IMR-90 (cell line): ENCODE measurements at regions of chr4 and their contacts with region 1.

Region 1: GRCh38 chr4:122334828-122335227 is 44.0 kb upstream of the ADAD1 start:
- DNase-seq: no peak
- ATAC-seq: no peak
- H3K4me3 ChIP-seq: no peak overlapping the region
- H3K27ac ChIP-seq: no peak overlapping the region
- H3K4me1 ChIP-seq: peaks cover 2% of the 10 kb centered on the region; the same call in 1 of the 2 replicates
- H3K27me3 ChIP-seq: no peaks in the 10 kb centered on the region
- CTCF ChIP-seq: no peak
- POLR2A ChIP-seq: no peak
- RAD21 ChIP-seq: no peak

Region 2: DNA sequence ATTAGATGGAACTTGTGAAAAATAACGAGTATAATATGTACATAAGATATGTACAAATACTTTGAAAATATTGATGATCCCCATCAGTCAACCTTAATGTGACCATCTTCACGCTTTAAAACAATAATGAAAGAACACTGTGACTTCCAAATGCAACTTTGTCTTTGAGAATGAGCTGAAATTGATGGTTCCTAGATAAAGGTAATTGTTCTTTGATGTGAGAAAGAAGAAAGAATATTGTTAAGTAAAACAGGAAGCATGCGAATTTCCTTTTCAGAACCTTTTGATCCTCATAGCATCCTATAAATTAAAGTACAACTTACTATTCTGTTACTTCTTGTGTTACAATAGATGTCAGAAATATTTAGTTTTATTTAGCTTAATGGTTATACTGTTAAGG is 99.5 kb after region 1 on chr4:
- CTCF ChIA-PET with region 1: interaction called, 11 read pairs
- POLR2A ChIA-PET with region 1: no interaction called
- dilution Hi-C with region 1: no loop called
- in situ Hi-C with region 1: no loop called
- intact Hi-C with region 1: no loop called
- DNase-seq: no peak
- ATAC-seq: no peak
- H3K4me3 ChIP-seq: no peak overlapping the region
- H3K27ac ChIP-seq: no peak overlapping the region
- H3K4me1 ChIP-seq: no peaks in the 10 kb centered on the region
- H3K27me3 ChIP-seq: peaks cover 5% of the 10 kb centered on the region
- CTCF ChIP-seq: no peak
- POLR2A ChIP-seq: no peak
- RAD21 ChIP-seq: no peak